H1 (cell line): ENCODE measurements at regions of chr22 and their contacts with region 1.

Region 1: DNA sequence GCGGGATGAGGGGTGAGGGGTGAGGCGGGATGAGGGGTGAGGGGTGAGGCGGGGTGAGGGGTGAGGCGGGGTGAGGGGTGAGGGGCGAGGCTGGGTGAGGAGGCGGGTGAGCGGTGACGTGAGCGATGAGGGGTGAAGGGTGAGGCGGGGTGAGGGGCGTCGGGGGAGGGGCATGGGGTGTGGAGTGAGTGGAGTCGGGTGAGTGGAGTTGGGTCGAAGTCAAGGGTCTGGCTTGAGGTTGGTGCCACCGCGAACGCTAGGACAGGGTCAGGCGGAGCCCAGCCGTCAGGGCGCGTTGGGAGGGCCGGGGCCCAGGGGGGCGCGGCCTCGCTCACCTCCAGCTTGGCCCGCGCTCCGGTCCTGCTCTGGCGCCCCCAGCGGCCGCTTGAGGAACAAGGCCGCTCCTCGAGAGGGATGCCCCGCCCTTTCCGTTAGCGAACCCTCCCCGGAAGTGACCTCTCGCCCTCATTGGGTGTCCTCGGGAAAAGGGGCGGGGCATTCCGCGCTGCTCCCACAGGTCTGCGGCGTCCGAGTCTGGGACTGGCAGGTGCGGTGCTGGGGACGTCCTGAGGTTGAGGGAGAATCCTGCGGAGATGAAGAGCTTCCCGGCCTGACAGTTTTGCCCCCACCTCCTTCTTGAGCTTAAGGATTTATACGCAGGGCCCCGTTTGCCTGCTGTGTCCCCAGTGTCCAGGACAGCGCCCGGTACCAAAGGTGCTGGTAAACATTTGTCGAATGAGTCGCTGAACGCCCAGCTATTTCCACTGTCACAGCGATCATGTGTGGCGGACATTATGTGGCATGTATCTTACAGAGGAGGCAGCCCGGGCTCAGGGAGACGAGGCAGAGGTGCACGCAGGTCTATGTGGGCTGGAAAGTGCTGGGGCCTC is at the start of gene SYCE3:
- DNase-seq: peak; percentile 88 to 100
- H3K4me3 ChIP-seq: peak within 1 kb of the TSS; percentile 33 to 77 (median 71); a peak in 7 of 8 replicates
- H3K27ac ChIP-seq: no peak within 1 kb of the TSS
- H3K4me1 ChIP-seq: peaks cover 0 to 3% (median 0%) of the 10 kb centered on the region in 4 experiments; a peak in 2 of 7 replicates
- H3K27me3 ChIP-seq: peaks cover 0 to 5% (median 3%) of the 10 kb centered on the region in 4 experiments; a peak in 5 of 7 replicates
- CTCF ChIP-seq: peak; percentile 81 to 88 (median 84)
- EP300 ChIP-seq: no peak
- POLR2A ChIP-seq: no peak
- RAD21 ChIP-seq: peak; percentile 55 to 69; a peak in 3 of 4 replicates
- total RNA-seq, gene SYCE3: not detected in 2 replicates

Region 2: GRCh38 chr22:50058906-50059880 is 503.6 kb before region 1 on chr22:
- CTCF ChIA-PET with region 1: no interaction called
- POLR2A ChIA-PET with region 1: no interaction called
- DNase-seq: peak in 1 of 2 experiments; percentile 27
- H3K4me3 ChIP-seq: peak overlapping the region; percentile 46 to 66 (median 56)
- H3K27ac ChIP-seq: no peak overlapping the region
- H3K4me1 ChIP-seq: peaks cover 0 to 11% (median 2%) of the 10 kb centered on the region in 4 experiments; a peak in 4 of 7 replicates
- H3K27me3 ChIP-seq: peaks cover 8 to 20% (median 11%) of the 10 kb centered on the region in 4 experiments
- CTCF ChIP-seq: peak; percentile 44 to 49 (median 48)
- EP300 ChIP-seq: no peak
- POLR2A ChIP-seq: no peak
- RAD21 ChIP-seq: peak; percentile 27 to 30; a peak in 3 of 4 replicates

Region 3: DNA sequence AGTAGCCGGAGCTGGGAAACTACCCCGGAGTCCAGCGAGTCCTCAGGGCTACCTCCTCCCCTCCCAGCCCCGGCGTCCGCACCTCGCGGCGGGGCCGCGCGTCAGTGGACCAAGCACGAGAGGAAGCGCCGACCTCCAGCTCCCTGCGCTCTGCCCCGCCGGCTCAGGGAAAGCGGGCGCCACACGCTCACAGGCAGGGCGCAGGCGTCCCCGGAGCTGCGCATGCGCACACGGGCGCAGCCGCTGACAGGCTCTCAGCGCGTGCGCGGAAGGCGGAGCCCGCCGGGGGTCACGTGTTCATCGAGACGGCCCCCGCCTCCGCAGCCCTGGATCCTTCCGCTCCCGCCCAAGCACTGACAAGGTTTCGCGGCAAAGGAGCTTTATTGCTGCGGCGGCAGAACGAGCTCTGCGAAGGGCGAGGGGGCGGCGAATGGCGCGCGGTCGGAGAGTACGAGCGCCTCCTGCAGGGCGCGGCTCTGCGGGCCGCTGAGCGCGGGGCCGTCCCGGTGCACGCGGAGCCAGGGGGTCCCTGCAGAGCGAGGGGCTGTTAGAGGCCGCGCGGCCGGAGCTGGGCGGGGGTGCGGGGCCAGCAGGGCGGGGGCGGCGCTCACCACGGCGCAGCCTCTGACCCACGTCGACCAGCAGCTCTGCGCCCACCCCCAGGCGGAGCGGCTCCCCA is 37.2 kb before region 1 on chr22 and contains the start of gene SCO2:
- CTCF ChIA-PET with region 1: interaction called, 7 read pairs
- POLR2A ChIA-PET with region 1: interaction called, 10 read pairs
- DNase-seq: peak; percentile 89 to 96
- H3K4me3 ChIP-seq: peak within 1 kb of the TSS; percentile 63 to 78 (median 67)
- H3K27ac ChIP-seq: no peak within 1 kb of the TSS; the same call in 1 of the 2 replicates
- H3K4me1 ChIP-seq: peaks cover 0 to 16% (median 7%) of the 10 kb centered on the region in 4 experiments; a peak in 5 of 7 replicates
- H3K27me3 ChIP-seq: peaks cover 23 to 39% (median 33%) of the 10 kb centered on the region in 4 experiments
- CTCF ChIP-seq: peak; percentile 49 to 61 (median 52)
- EP300 ChIP-seq: no peak
- POLR2A ChIP-seq: 0 out of 3 replicates have a peak, but pooled peaks of 1 of the 2 experiments have one; percentile 33
- RAD21 ChIP-seq: peak; percentile 32 to 51; a peak in 3 of 4 replicates
- total RNA-seq, gene SCO2: 2.2 TPM in 1 of 2 replicates, not detected in the other

Region 4: GRCh38 chr22:50551160-50551752 is 11.5 kb before region 1 on chr22:
- CTCF ChIA-PET with region 1: interaction called, 12 read pairs
- POLR2A ChIA-PET with region 1: interaction called, 7 read pairs
- DNase-seq: no peak
- H3K4me3 ChIP-seq: no peak overlapping the region
- H3K27ac ChIP-seq: no peak overlapping the region
- H3K4me1 ChIP-seq: peaks cover 0 to 5% (median 2%) of the 10 kb centered on the region in 4 experiments; a peak in 3 of 7 replicates
- H3K27me3 ChIP-seq: peaks cover 0 to 3% (median under 1%) of the 10 kb centered on the region in 4 experiments; a peak in 3 of 7 replicates
- CTCF ChIP-seq: no peak
- EP300 ChIP-seq: no peak
- POLR2A ChIP-seq: no peak
- RAD21 ChIP-seq: no peak

Region 5: GRCh38 chr22:50582562-50583293 is 20.0 kb after region 1 on chr22 and contains the start of gene CHKB:
- CTCF ChIA-PET with region 1: interaction called, 84 read pairs
- POLR2A ChIA-PET with region 1: interaction called, 37 read pairs
- DNase-seq: peak; percentile 88 to 98
- H3K4me3 ChIP-seq: peak within 1 kb of the TSS; percentile 72 to 91 (median 80)
- H3K27ac ChIP-seq: peak within 1 kb of the TSS; percentile 86
- H3K4me1 ChIP-seq: peaks cover 4 to 15% (median 7%) of the 10 kb centered on the region in 4 experiments
- H3K27me3 ChIP-seq: no peaks in the 10 kb centered on the region
- CTCF ChIP-seq: no peak
- EP300 ChIP-seq: no peak
- POLR2A ChIP-seq: peak in 1 of 2 experiments; percentile 62; a peak in 1 of 3 replicates
- RAD21 ChIP-seq: no peak
- total RNA-seq, gene CHKB: 42.2 and 51.8 TPM in 2 replicates

Region 6: DNA sequence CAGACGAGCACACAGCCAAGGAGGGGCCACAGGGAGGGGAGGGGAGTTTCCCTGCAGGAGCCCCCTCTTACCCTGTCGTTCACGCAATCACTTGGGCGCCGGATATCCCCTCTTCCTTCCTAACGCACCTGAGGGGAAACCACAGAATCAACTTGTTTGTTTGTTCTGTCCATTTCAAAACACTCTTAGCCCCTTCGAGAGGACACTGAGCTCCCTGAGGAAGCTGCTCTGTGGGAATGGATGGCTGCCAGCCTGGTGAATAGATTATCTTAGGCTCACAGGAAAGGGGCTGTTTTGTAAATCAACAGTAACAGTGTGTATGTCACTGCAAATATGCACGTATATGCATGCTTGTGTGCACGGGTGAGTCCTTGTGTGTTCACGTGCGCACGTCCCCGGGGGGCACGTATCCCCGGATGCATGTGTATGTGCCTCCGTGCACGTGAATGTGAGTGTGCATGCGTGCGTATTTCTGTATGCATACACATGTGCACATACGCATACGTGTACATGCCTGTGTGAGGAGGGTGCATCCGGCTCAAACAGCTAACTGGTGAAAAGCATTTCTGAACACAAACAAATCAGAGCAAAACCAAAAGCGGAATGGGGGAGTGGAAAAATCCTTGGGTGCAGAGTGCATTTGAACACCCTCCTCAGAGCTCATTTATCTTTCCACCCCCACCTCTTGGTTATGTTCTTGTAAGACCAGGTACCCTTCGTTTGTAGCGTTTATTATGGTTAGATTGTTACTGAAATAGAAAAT is 58.0 kb after region 1 on chr22:
- CTCF ChIA-PET with region 1: interaction called, 11 read pairs
- POLR2A ChIA-PET with region 1: no interaction called
- DNase-seq: no peak
- H3K4me3 ChIP-seq: peak overlapping the region in 1 of 4 experiments; percentile 42; a peak in 2 of 8 replicates
- H3K27ac ChIP-seq: no peak overlapping the region
- H3K4me1 ChIP-seq: peaks cover 0 to 10% (median 7%) of the 10 kb centered on the region in 4 experiments; a peak in 6 of 7 replicates
- H3K27me3 ChIP-seq: peaks cover 0 to 3% (median 0%) of the 10 kb centered on the region in 4 experiments; a peak in 3 of 7 replicates
- CTCF ChIP-seq: peak in 2 of 3 experiments; percentile 74 to 78; a peak in 2 of 4 replicates
- EP300 ChIP-seq: no peak
- POLR2A ChIP-seq: no peak
- RAD21 ChIP-seq: no peak

Region 7: GRCh38 chr22:50713571-50714056 is 150.8 kb after region 1 on chr22:
- CTCF ChIA-PET with region 1: no interaction called
- POLR2A ChIA-PET with region 1: no interaction called
- DNase-seq: no peak
- H3K4me3 ChIP-seq: no peak overlapping the region
- H3K27ac ChIP-seq: no peak overlapping the region
- H3K4me1 ChIP-seq: no peaks in the 10 kb centered on the region
- H3K27me3 ChIP-seq: peaks cover 0 to 8% (median 5%) of the 10 kb centered on the region in 4 experiments; a peak in 6 of 7 replicates
- CTCF ChIP-seq: no peak
- EP300 ChIP-seq: no peak
- POLR2A ChIP-seq: no peak
- RAD21 ChIP-seq: no peak